ENCODE measurements at regions of chr13 and their contacts with region 1.

Region 1: DNA sequence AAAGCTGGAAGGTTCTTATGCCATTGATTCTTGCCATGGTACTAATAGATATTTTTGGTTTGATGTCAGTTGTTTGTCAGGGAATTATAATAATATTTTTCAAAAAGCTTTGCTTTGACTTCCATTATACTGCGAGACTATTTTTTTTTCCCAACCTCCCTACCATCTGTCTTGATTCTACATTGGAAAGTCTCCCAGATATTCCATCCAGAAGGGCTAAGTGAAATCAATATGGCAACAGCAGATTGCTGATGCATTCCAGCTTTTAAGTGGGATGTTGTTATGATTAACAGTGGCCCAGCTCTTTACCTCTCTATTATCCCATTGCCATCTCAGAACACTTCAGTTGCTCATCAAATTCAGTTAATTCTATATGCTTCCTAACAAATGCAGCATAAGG is 247.4 kb downstream of the OXGR1 start:
- DNase-seq: no peak
- H3K4me3 ChIP-seq: no peak overlapping the region
- H3K27ac ChIP-seq: no peak overlapping the region
- H3K4me1 ChIP-seq: no peaks in the 10 kb centered on the region
- H3K27me3 ChIP-seq: no peaks in the 10 kb centered on the region
- CTCF ChIP-seq: no peak
- EP300 ChIP-seq: no peak
- RAD21 ChIP-seq: no peak

Region 2: DNA sequence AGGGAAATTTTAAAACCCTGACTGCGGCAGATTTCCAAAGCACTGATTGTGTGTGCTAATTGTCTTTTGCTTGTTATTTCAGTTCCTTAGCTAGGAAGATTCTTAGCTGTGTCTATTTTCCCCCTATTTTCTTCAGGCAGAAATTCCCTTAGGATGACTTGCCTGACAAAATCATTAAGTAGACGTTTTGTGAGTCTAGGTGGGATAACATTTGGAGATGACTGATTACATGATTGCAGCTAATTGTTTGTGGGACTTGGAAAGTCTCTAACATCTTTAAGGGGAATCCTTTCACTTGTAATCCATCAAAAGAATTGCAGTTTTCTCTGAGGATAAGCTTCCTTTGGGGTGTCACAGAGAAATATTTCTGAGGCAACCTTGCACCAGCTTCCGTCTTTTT is 19.4 kb after region 1 on chr13:
- CTCF ChIA-PET with region 1: interaction called, 10 read pairs
- POLR2A ChIA-PET with region 1: no interaction called
- DNase-seq: no peak
- H3K4me3 ChIP-seq: no peak overlapping the region
- H3K27ac ChIP-seq: no peak overlapping the region
- H3K4me1 ChIP-seq: peaks cover 0 to 2% of the 10 kb centered on the region in 2 experiments; a peak in 2 of 4 replicates
- H3K27me3 ChIP-seq: no peaks in the 10 kb centered on the region
- CTCF ChIP-seq: no peak
- EP300 ChIP-seq: no peak
- RAD21 ChIP-seq: no peak

Region 3: DNA sequence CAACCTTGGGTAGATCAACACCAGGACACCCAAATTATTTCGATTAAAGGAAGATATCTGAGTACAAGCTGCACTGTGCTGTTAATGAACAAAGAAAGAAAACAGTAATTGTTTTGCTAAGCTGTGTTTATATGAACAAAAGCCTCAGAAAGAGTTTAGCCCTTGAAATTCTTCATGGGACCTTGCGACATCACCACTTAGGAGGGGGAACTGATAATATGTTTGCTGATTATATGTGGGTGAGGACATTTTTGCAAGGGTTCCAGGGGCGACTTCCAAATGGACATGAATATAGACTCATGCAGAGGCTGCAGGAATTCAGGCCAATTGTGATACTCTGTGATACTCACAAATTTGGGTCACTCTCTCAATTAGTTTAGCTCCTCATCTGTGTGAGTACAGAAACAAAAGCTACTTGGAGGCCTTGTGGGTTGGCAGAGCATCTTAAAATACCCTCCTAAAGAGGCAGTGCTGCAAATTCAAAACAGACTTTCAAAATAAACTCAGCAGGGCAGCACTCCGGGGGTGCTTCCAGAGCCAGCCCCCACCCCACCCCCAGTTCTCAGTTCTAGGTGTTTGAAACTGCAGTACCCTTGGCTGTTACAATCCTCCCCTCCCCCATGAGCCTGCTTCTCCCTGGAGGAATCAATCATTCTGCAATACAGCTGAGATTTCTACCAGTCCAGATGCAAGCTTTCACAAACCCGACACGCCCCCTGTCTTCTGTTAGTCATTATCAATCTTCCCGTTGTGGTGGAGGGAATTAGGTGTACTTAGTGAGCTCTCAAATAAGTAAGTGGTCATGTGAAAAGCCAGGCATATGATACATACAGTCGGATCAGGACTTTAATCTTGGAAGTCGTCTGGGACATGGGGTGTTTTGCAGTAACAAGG is 378.3 kb after region 1 on chr13:
- CTCF ChIA-PET with region 1: no interaction called
- POLR2A ChIA-PET with region 1: no interaction called
- DNase-seq: peak; percentile 50
- H3K4me3 ChIP-seq: no peak overlapping the region
- H3K27ac ChIP-seq: peak overlapping the region; percentile 34 to 67
- H3K4me1 ChIP-seq: peaks cover 20 to 45% of the 10 kb centered on the region in 2 experiments
- H3K27me3 ChIP-seq: no peaks in the 10 kb centered on the region
- CTCF ChIP-seq: no peak; the same call in none of the 2 replicates
- EP300 ChIP-seq: 0 out of 4 replicates have a peak, but pooled peaks of 1 of the 2 experiments have one; percentile 17
- RAD21 ChIP-seq: no peak; the same call in 1 of the 2 replicates